Activated CD4-positive, alpha-beta T cell treated with anti-CD3 and anti-CD28 coated beads, Interleukin-2, amount 10 ng/mL, durations not matched to agents 24 days and 14 days (primary cell): ENCODE measurements at regions of chr1 and their contacts with region 1.

Region 1: GRCh38 chr1:165679282-165680036 is 18.9 kb downstream of the ALDH9A1 start:
- DNase-seq: no peak
- H3K4me3 Mint-ChIP-seq: no peak overlapping the region
- H3K27ac Mint-ChIP-seq: no peak overlapping the region
- H3K4me1 Mint-ChIP-seq: peaks cover 25% of the 10 kb centered on the region
- H3K27me3 Mint-ChIP-seq: no peaks in the 10 kb centered on the region

Region 2: DNA sequence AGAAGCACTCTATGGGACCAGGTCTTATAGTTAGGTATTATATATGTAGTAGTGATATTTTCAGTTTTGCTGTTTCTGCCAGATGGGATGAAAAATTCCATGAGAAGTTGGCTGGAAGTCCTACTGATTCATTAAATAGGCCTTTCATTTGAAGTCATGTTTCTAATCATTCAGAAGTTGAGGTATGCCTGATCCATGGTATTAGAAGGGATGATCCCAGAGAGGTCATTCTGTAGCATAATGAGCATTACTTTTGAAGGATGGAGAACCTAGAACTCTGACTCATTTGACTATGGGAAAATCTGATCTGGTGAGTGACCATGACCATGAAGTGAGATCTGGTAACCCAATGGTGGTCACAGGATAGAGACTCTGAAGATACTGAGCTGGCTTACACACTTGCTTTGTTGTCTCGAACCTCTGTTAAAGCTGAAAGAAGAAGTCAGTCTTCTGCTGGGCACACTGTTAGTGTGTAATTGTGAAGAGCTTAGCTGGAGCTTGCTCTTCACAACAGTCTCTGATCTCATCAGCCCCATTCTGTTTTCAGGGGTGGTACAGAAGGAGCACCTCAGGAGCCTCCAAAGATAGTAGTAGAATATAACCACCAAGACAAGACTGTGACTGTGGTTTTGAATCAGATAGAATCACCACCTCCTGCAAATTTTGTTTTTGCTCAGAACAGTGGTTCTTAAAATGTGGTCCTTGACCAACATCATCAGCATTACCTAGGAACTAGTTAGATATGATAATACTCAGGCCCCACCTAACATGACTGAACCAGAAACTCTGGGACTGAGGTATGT is 39.4 kb before region 1 on chr1:
- intact Hi-C with region 1: loop called (anchors 5 kb)
- DNase-seq: no peak
- H3K4me3 Mint-ChIP-seq: no peak overlapping the region
- H3K27ac Mint-ChIP-seq: peak overlapping the region; percentile 27
- H3K4me1 Mint-ChIP-seq: peaks cover 12% of the 10 kb centered on the region
- H3K27me3 Mint-ChIP-seq: no peaks in the 10 kb centered on the region